SK-N-SH (cell line): ENCODE measurements at regions of chr1 and their contacts with region 1.

Region 1: GRCh38 chr1:237041795-237042525 is at the start of gene RYR2:
- DNase-seq: peak; percentile 88
- H3K4me3 ChIP-seq: peak within 1 kb of the TSS in 1 of 2 experiments; percentile 50; a peak in 3 of 4 replicates
- H3K27ac ChIP-seq: no peak within 1 kb of the TSS; a peak in 1 of 4 replicates
- H3K4me1 ChIP-seq: peaks cover 0 to 7% of the 10 kb centered on the region in 2 experiments; a peak in 2 of 4 replicates
- H3K27me3 ChIP-seq: no peaks in the 10 kb centered on the region
- CTCF ChIP-seq: no peak
- EP300 ChIP-seq: no peak
- RAD21 ChIP-seq: peak; percentile 68
- polyA plus RNA-seq, gene RYR2: under 0.01 and 0.03 TPM in 2 replicates

Region 2: DNA sequence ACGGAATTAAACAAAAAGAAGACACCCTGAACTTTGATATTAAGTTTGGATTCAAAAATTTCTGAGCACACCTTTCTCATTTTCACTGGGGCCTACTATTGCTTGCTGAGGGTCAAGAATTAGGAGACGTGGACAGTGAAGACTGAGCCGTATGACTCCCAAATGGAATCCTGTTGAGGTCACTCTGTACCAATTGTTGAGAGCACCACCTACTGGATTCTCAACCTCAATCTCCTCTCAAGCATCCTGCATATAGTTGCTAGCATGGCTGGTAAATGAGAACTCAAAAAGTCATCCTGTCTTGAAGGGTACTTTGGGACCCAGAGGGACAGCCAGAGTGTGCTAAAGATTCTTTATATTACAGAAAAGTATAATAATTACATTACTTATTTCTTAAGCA is 267.0 kb before region 1 on chr1:
- CTCF ChIA-PET with region 1: no interaction called
- POLR2A ChIA-PET with region 1: no interaction called
- DNase-seq: peak; percentile 27
- H3K4me3 ChIP-seq: no peak overlapping the region
- H3K27ac ChIP-seq: no peak overlapping the region
- H3K4me1 ChIP-seq: no peaks in the 10 kb centered on the region
- H3K27me3 ChIP-seq: no peaks in the 10 kb centered on the region
- CTCF ChIP-seq: peak; percentile 43
- EP300 ChIP-seq: no peak
- RAD21 ChIP-seq: peak; percentile 52

Region 3: GRCh38 chr1:237316352-237316751 is 274.4 kb after region 1 on chr1:
- CTCF ChIA-PET with region 1: interaction called, 10 read pairs
- POLR2A ChIA-PET with region 1: no interaction called
- DNase-seq: no peak
- H3K4me3 ChIP-seq: no peak overlapping the region
- H3K27ac ChIP-seq: no peak overlapping the region
- H3K4me1 ChIP-seq: no peaks in the 10 kb centered on the region
- H3K27me3 ChIP-seq: no peaks in the 10 kb centered on the region
- CTCF ChIP-seq: no peak
- EP300 ChIP-seq: no peak
- RAD21 ChIP-seq: no peak

Region 4: GRCh38 chr1:237386362-237387143 is 344.6 kb after region 1 on chr1:
- CTCF ChIA-PET with region 1: interaction called, 72 read pairs
- POLR2A ChIA-PET with region 1: no interaction called
- DNase-seq: peak; percentile 39
- H3K4me3 ChIP-seq: no peak overlapping the region; a peak in 1 of 4 replicates
- H3K27ac ChIP-seq: no peak overlapping the region
- H3K4me1 ChIP-seq: peaks cover 0 to 2% of the 10 kb centered on the region in 2 experiments; a peak in 1 of 4 replicates
- H3K27me3 ChIP-seq: no peaks in the 10 kb centered on the region
- CTCF ChIP-seq: peak; percentile 67
- EP300 ChIP-seq: no peak
- RAD21 ChIP-seq: peak; percentile 89